ENCODE measurements at regions of chr1 and their contacts with region 1.

Region 1: DNA sequence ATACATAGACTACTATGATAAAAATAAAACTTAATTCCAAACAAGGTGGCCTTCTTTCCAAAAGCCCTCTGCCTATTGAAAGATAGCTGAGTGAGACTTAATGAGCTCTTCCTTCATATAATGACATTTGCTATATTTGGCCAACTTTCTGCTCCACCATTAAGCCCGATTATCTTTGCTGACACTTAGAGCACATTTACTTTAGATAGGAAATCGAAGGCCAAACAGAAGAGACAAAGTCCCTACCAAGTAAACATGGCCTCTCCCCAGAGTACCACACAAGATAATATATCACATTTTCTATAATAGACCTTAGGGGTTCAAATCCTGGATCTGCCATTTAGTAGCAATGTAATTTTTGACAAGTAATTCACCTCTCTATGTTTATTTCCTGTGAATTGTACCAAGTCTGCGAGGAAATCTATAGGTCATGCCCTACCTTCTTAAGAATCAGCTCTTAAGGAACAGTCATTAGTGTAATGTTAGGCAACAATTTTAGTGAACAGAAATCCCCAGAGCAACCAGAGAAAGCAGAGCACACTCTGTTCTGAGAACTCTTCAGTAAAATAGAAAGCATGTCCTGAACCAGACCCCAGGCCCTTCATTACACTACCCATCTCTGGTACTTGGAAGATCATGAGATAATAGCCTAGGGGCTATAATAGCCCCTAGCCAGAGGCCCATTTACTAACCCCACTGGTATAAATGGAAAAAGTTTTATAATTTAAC is 17.3 kb upstream of the COA6 start:
- DNase-seq: no peak
- H3K4me3 Mint-ChIP-seq: peak overlapping the region; percentile 90
- H3K27ac Mint-ChIP-seq: peak overlapping the region; percentile 30
- H3K4me1 Mint-ChIP-seq: peaks cover 21% of the 10 kb centered on the region
- H3K27me3 Mint-ChIP-seq: peaks cover 15% of the 10 kb centered on the region

Region 2: GRCh38 chr1:234331511-234331910 is 24.4 kb before region 1 on chr1:
- intact Hi-C with region 1: no loop called
- DNase-seq: no peak
- H3K4me3 Mint-ChIP-seq: no peak overlapping the region
- H3K27ac Mint-ChIP-seq: no peak overlapping the region
- H3K4me1 Mint-ChIP-seq: peaks cover 5% of the 10 kb centered on the region
- H3K27me3 Mint-ChIP-seq: peaks cover 24% of the 10 kb centered on the region

Region 3: GRCh38 chr1:234478481-234479309 is 122.7 kb after region 1 on chr1 and contains the start of gene TARBP1:
- intact Hi-C with region 1: loop called (anchors 5 kb)
- DNase-seq: peak; percentile 76
- H3K4me3 Mint-ChIP-seq: peak within 1 kb of the TSS; percentile 90
- H3K27ac Mint-ChIP-seq: peak within 1 kb of the TSS; percentile 75
- H3K4me1 Mint-ChIP-seq: peaks cover 47% of the 10 kb centered on the region
- H3K27me3 Mint-ChIP-seq: peaks cover 17% of the 10 kb centered on the region
- total RNA-seq, gene TARBP1: 71.7 and 78.9 TPM in 2 replicates

Measured in activated T-helper 1 cell treated with anti-CD3 and anti-CD28 coated beads, Interleukin-12 subunit alpha, Interleukin-12 subunit beta, Interleukin-2, Interleukin-4 antibody, amounts not matched to agents 30 ng/mL and 10 ng/mL and 1 ng/mL, durations not matched to agents 14 hours and 24 hours and 36 hours (primary cell).